Right ventricle myocardium inferior (tissue), 1 donor: ENCODE measurements at regions of chr1 and their contacts with region 1.

Region 1: DNA sequence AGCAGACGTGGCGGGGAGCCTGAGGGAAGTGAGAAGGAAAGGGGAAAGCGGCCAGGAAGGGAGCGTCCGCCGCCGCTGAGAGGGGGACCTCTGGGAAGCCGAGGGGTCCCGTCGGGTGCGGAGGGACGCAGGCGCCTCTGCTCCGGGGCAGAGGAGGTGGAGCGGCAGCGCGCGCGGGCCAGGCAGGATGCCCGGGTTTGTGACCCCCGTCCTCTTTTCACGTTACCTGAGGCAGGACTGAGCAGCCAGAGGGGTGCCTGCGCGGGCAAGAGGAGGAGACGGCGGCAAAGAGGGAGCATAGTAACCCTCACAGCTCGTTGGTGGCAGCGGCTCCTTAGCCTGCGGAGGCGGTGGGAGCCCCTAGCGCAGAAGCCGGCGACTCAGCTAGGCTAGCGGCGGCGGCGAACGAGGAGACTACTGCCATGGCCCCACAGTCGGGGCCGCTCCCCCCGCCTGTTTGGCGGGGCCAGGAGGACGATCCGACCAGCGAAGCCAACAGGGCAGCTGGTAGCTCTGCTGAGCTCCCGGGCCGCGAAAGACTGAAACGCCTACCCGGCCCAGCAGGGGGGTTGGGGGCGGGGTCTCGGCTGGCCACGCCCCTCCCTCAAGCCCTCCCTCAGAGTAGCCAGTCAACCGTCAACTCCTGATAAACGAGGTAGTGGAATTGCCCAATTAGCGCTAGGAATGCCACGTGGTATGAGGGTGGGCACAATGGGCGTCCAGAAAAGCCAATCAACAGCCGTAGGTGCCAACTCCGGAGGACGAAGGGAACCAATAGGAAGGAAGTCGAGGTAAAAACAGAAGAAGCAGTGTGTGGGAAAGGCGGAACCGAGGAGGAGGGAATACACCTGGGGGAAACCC is at the start of gene TESK2:
- DNase-seq: peak; percentile 95
- ATAC-seq: peak; percentile 98
- total RNA-seq, gene TESK2: 1.5 TPM

Region 2: DNA sequence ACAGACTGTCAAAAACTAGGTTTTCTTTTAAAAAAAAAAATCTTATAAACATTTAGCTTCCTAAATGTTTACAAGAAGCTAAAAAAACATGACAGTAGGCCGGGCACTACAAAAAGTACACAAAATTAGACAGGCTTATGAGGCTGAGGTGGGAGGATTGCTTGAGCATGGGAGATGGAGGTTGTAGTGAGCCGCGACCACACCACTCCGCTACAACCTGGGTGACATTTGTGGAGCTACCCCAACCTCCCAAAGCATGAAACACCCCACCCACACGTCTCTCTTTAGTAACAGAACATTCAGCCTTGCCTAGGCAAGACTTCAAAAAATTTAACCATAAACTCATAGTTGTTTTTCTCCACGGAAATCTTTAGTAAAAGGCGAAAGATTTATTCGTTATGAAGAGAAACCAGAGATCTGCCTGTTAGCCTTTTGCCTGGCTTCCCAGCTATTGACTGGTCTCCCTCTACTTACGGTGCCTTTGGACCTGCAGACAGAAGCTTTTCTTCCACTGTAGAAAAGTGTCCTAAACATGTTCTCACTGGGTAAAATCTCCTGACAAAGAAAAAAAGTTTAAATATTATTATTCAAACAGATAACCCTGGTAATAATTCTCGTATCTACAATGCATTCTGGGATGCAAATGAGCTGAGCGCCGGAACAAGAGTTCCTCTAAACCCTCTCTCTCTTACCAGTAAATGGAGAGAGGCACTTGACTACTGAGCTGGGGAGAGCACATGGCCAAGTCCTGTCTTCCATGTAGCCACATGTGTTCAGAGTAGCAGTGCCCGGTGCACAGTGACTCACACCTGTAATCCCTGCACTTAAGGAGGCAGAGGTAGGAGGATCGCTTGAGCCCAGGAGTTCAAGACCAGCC is 769.1 kb before region 1 on chr1:
- intact Hi-C with region 1: loop called (anchors 10 kb)
- DNase-seq: no peak
- ATAC-seq: peak; percentile 65

Region 3: GRCh38 chr1:45011837-45012638 is 478.8 kb before region 1 on chr1 and contains the start of gene UROD:
- intact Hi-C with region 1: loop called (anchors 2 kb)
- DNase-seq: peak; percentile 96
- ATAC-seq: peak; percentile 95
- total RNA-seq, gene UROD: 71.7 TPM

Region 4: GRCh38 chr1:45339789-45340570 is 150.9 kb before region 1 on chr1 and contains the starts of genes MUTYH and TOE1:
- intact Hi-C with region 1: loop called (anchors 5 kb)
- DNase-seq: peak; percentile 98
- ATAC-seq: peak; percentile 96
- total RNA-seq, gene MUTYH: 8.3 TPM
- total RNA-seq, gene TOE1: 3.8 TPM

Region 5: DNA sequence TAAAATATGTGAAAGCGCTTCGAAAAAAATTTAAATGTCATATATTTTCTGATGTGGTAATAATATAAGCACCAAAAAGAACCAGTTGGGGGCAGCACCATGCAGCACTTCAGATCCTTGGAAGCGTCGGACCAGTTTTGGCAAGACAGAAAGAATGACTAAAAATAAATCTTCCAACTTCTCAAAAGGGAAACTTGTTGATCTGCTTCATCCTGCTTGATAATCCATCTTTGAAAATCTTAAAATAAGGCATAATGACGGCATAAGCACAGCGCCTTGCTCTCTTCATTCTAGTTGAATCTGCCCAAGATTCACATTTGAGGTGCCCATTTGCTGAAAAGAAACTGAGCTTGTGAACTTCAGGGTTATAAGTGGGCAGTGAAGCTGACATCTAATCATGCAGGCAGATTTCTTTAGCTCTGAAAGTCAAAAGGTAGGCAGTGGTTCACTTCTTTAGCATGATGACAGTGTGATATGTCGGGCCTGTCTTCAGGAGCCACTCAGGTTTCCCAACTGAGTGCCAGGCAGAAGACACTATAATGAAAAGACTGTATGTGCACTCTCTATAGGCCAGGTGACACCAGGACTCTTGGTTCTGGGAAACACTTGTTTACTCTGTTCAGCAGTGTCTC is 130.9 kb before region 1 on chr1:
- intact Hi-C with region 1: loop called (anchors 1 kb)
- DNase-seq: no peak
- ATAC-seq: peak; percentile 81